Aorta (tissue), 5 donors: ENCODE measurements at regions of chr11 and their contacts with region 1.

Region 1: DNA sequence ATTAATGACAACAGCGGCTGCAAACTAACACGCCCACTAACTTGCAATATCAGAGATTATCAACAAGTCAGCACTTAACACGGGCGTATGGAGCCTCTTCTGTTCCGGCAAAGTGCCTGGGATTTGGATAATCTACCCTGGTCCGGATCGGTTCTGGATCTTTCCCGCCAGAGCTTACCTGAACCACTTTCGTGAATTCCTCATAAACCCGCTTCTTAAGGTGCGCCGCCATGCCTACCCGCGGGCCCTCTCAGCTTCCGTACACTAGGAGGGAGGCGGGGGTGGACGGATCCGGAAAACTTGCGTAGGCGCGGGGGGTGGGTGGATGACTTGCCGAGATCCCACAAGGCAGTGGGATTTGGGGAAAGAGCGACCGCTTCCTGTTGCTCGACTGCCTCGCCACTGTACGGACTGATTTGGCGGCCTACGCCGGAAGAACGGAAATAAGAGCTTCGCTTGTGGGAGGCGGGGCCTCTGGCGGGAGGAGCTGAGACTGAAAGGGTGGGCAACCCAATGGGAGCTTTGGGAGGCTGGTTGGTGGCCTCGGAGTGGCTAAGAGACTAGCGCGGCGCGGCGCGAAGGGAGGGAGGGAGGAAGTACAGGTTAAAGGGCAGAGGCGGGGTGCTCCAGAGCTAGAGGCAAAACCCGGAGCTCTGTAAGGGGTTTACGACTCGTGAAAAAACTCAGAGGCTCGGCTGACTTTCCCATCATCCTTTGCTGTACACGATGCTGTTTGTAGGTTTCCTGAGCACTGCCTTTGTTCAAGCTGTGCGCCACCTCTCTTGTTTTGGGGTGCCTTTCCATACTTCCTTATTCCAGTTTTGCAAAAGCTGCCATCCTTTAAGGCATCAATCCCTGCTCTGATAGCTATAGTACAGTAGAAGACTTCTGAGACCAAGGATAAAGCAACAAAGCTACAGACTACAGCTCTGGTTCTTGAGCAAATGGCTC is at the start of gene INTS4:
- DNase-seq: peak; percentile 99 to 100
- ATAC-seq: peak; percentile 99
- H3K4me3 ChIP-seq: peak within 1 kb of the TSS; percentile 79 to 97
- H3K27ac ChIP-seq: peak within 1 kb of the TSS in 1 of 2 donors; percentile 78
- H3K4me1 ChIP-seq: no peaks in the 10 kb centered on the region
- H3K27me3 ChIP-seq: no peaks in the 10 kb centered on the region
- total RNA-seq, gene INTS4: 25.4 to 40.2 TPM

Region 2: GRCh38 chr11:77820563-77821348 is 173.9 kb before region 1 on chr11 and contains the starts of genes AAMDC and RSF1:
- intact Hi-C with region 1: loop called (anchors 1 to 10 kb)
- DNase-seq: peak; percentile 99 to 100
- ATAC-seq: peak; percentile 97
- H3K4me3 ChIP-seq: peak within 1 kb of the TSS; percentile 71 to 96
- H3K27ac ChIP-seq: peak within 1 kb of the TSS; percentile 82 to 95
- H3K4me1 ChIP-seq: no peaks in the 10 kb centered on the region
- H3K27me3 ChIP-seq: no peaks in the 10 kb centered on the region
- total RNA-seq, gene AAMDC: 28.4 to 36.5 TPM
- total RNA-seq, gene RSF1: 94.3 to 100 TPM

Region 3: DNA sequence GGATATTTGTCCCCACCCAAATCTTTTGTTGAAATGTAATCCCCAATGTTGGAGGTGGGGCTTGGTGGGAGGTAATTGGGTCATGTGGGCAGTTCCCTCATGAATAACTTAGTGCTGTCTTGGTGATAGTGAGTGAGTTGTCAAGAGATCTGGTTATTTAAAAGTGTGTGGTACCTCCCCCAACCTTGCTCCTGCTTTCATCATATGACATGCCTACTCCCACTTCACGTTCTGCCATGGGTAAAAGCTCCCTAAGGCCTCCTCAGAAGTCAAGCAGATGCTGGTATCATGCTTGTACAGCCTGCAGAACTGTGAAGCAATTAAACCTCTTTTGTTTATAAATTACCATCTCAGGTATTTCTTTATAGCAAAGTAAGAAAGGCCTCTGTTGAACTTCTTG is 143.2 kb before region 1 on chr11:
- intact Hi-C with region 1: no loop called
- DNase-seq: no peak
- ATAC-seq: no peak
- H3K4me3 ChIP-seq: no peak overlapping the region
- H3K27ac ChIP-seq: no peak overlapping the region
- H3K4me1 ChIP-seq: no peaks in the 10 kb centered on the region
- H3K27me3 ChIP-seq: no peaks in the 10 kb centered on the region

Region 4: GRCh38 chr11:78039919-78040671 is 45.4 kb after region 1 on chr11:
- intact Hi-C with region 1: loop called (anchors 5 kb)
- DNase-seq: peak; percentile 88 to 93
- ATAC-seq: peak; percentile 62
- H3K4me3 ChIP-seq: no peak overlapping the region
- H3K27ac ChIP-seq: peak overlapping the region in 1 of 2 donors; percentile 85
- H3K4me1 ChIP-seq: no peaks in the 10 kb centered on the region
- H3K27me3 ChIP-seq: no peaks in the 10 kb centered on the region

Region 5: GRCh38 chr11:78045851-78046485 is 51.3 kb after region 1 on chr11:
- intact Hi-C with region 1: loop called (anchors 5 kb)
- DNase-seq: peak; percentile 87 to 95
- ATAC-seq: peak; percentile 94
- H3K4me3 ChIP-seq: peak overlapping the region; percentile 40 to 72
- H3K27ac ChIP-seq: peak overlapping the region in 1 of 2 donors; percentile 18
- H3K4me1 ChIP-seq: no peaks in the 10 kb centered on the region
- H3K27me3 ChIP-seq: no peaks in the 10 kb centered on the region